Activated naive CD4-positive, alpha-beta T cell treated with anti-CD3 and anti-CD28 coated beads for 36 hours (primary cell): ENCODE measurements at regions of chr12 and their contacts with region 1.

Region 1: DNA sequence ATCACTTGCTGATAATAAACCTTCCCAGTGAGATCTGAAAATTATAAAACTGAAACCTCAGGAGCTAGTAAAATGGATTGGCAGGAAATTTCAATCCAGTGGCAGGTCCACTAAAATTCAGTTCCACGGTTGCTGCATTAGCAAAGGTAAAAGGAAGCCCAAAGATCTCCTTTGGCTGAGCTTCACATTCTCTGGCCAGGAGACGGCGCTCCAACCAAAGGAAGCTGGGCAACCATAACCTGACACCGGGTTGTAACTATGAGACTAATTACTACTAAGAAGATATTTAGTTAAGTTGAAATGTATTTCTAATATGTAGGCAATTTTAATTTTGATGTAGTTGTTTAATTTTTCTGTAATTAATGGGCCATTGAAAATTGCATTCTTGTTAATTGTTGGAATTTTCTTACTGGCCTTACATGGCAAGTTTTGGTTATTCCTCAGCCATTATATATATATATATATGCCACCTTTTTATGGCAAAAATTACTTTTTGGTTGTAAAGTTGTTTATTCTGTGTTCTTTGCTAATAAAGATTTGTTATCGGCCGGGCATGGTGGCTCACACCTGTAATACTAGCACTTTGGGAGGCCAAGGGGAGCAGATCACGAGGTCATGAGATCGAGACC is 17.0 kb downstream of the OR8S1 start:
- DNase-seq: peak; percentile 83
- H3K4me3 Mint-ChIP-seq: no peak overlapping the region
- H3K27ac Mint-ChIP-seq: no peak overlapping the region
- H3K4me1 Mint-ChIP-seq: peaks cover 14% of the 10 kb centered on the region
- H3K27me3 Mint-ChIP-seq: no peaks in the 10 kb centered on the region

Region 2: DNA sequence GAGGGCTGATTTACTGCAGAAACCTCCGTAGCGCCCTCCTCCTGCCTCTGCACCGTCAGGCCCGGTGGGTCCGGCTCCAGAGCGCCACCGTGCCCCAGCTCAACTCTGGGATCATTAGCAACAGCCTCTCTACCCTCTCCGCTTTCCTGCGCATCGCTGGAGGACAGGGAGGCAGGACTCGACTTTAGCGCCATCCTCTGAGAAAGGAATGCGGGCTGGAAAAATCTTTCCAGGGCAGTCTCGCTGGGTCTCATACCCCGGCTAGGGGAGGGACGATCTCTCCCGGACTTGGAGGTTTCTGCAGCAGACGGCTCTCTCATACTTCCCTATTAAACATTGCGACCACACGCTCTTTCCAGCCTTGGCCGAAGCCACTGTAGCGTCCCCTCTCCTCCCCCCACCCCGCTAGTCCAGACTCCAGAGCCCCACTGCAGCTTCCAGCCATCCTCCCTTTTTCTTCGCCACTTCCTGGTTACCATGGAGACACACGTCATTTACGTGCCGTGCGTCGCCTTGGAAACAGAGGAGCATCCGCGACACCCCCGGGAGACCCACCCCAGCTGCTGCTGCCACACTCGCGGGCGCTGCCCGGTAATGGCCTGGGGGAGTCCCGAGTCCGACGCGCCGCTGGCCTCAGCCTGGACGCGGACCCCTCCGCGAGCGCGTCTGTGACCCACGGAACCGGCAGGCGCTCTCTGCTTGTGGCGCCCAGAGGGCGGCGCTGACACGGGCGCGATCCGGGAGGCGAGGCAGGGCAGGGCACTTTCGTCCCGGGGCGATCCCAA is 359.1 kb before region 1 on chr12 and contains the start of gene CCDC184:
- CTCF ChIA-PET with region 1: no interaction called
- intact Hi-C with region 1: loop called (anchors 5 kb)
- DNase-seq: peak; percentile 70
- H3K4me3 Mint-ChIP-seq: peak within 1 kb of the TSS; percentile 88
- H3K27ac Mint-ChIP-seq: no peak within 1 kb of the TSS
- H3K4me1 Mint-ChIP-seq: peaks cover 12% of the 10 kb centered on the region
- H3K27me3 Mint-ChIP-seq: peaks cover 15% of the 10 kb centered on the region
- total RNA-seq, gene CCDC184: 0.14 TPM in 1 of 2 experiments, not detected in the other

Region 3: DNA sequence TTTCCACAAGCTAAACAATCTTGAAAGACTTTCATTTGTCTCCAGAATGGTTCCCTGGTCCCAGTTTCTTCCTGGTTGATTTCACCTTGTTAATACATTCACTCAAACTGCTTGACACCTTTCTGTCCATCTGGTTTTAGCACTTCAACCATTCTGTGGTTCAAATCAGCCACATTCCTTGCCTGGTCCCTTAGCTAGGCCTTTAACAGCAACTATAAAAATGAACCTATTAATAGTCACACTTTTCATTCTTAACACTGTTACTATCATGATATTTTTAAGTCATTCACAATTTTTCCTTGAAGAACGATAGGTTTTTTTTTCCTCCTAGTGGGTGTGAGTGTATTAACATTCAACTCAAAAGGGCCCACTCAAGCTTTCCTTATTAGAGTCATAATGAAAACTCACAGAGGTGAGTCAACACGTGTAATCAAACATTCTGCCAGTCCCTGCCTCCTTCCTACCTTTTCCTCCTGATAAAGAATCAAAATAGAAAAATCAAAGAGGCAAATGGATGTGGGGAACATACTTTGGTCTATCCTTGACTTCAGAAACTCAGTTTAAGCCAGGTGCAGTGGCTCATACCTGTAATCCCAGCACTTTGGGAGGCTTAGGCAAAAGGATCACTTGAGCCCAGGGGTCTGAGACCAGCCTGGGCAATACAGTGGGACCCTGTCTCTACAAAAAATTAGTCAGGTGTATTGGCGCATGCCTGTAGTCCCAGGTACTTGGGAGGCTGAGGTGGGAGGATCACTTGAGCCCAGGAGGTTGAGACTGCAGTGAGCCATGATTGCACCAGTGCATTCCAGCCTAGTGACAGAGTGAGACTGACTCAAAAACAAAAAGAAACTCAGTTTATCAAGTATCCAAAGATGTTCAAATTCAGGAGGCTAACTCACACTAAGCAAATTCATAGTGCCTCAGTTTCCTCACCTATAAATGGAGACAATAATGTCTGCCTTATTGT is 208.6 kb after region 1 on chr12:
- CTCF ChIA-PET with region 1: interaction called, 4 read pairs
- intact Hi-C with region 1: loop called (anchors 5 kb)
- DNase-seq: peak; percentile 28
- H3K4me3 Mint-ChIP-seq: no peak overlapping the region
- H3K27ac Mint-ChIP-seq: peak overlapping the region; percentile 82
- H3K4me1 Mint-ChIP-seq: peaks cover 19% of the 10 kb centered on the region
- H3K27me3 Mint-ChIP-seq: no peaks in the 10 kb centered on the region